Common myeloid progenitor, CD34-positive (primary cell): ENCODE measurements at regions of chr19 and their contacts with region 1.

Region 1: GRCh38 chr19:11736696-11737095 is 2.0 kb downstream of the ZNF823 start:
- DNase-seq: peak; percentile 27 to 77 (median 74)
- H3K4me3 ChIP-seq: peak overlapping the region in 1 of 7 experiments; percentile 28
- H3K27ac ChIP-seq: no peak overlapping the region
- H3K4me1 ChIP-seq: peaks cover 0 to 24% (median 21%) of the 10 kb centered on the region in 4 experiments
- H3K27me3 ChIP-seq: no peaks in the 10 kb centered on the region

Region 2: DNA sequence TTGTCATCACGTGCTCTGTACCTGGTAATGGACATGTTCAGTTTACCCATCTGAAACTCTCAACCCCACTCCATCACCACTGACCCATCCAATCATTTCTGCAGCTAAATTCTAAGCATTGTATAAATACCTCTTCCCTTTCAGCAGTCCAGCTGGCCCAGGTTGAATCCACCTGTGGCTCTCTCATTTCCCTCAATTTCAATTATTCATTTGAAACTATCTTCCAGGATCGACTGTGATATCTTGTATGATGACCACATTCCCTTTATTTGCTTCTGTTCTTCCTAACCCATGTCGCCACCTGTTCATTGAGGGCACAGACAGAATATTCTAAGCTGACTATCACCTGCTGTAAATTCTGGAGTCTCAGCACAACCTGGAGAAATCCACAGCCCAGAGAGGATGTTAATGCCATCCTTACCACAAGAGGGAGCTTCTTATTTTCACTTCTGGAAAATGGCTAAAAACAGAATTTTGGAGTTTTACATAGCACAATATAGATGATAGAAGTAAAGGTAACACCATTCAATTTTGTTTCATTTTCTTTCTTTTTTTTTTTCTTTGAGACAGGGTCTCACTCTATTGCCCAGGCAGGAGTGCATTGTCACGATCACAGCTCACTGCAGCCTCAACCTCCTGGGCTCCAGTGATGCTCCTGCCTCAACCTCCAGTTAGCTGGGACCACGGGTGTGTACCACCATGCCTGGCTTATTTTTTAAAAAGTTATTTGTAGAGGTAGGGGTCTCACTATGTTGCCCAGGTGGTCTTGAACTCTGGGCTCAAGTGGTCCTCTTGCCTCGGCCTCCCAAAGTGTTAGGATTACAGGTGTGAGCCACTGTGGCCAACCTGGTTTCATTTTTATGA is 36.5 kb before region 1 on chr19:
- CTCF ChIA-PET with region 1: interaction called, 10 read pairs
- POLR2A ChIA-PET with region 1: no interaction called
- DNase-seq: peak; percentile 34 to 64 (median 58)
- H3K4me3 ChIP-seq: no peak overlapping the region
- H3K27ac ChIP-seq: no peak overlapping the region
- H3K4me1 ChIP-seq: peaks cover 1% of the 10 kb centered on the region in 4 experiments
- H3K27me3 ChIP-seq: peaks cover 0 to under 1% (median 0%) of the 10 kb centered on the region in 5 experiments